Gastrocnemius medialis (tissue), 4 donors: ENCODE measurements at regions of chr2 and their contacts with region 1.

Region 1: DNA sequence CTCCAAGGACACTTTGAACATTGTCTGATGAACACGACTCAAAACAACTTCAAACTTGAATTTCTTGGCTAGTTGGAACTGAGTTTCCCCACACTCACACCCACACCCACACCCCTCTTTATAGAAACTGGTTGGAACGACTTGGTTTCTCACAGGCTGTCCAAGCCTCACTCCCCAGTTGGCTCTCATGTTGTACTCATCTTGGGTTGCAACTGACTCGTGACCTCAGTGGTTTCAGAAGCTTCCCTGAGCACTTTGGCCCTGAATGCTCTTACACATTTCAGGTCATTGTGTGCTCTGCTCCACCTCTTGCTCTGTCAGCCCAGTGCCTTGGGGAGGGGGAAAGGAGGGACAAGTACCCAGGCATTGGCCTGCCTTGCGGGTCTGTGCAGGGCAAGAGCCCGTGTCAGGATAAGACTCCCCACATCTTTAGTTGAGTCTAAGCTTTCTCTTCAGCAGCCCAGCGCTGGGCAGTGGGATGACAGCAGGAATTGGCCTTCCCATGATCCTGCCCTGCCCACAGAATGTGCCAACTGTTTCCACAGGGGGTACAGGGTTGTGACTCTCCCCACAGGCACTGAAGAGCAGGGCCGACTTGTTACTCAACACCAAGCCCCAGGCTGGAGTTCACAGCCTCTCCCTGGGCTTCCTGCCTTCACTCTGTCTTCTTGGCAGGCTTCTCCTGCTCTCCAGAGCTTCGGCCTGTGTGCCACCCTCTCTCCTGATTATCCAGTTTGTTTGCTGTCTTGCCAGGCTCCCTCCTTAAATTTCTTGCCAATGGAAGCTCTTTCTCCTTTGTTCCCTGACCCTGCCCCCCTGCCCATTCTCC is 104.6 kb downstream of the RTN4 start:
- DNase-seq: peak; percentile 91 to 97
- ATAC-seq: peak; percentile 91 to 96
- H3K4me3 ChIP-seq: peak overlapping the region in 3 of 4 donors; percentile 21 to 47 (median 27)
- H3K27ac ChIP-seq: peak overlapping the region; percentile 91 to 95 (median 94)
- H3K4me1 ChIP-seq: peaks cover 22 to 27% of the 10 kb centered on the region in 2 donors
- H3K27me3 ChIP-seq: no peaks in the 10 kb centered on the region
- CTCF ChIP-seq: no peak
- POLR2A ChIP-seq: peak; percentile 50 to 57

Region 2: GRCh38 chr2:54966165-54966832 is 20.7 kb after region 1 on chr2:
- in situ Hi-C with region 1: no loop called
- intact Hi-C with region 1: loop called (anchors 2 kb)
- DNase-seq: peak; percentile 53 to 73
- ATAC-seq: peak; percentile 57 to 70
- H3K4me3 ChIP-seq: no peak overlapping the region
- H3K27ac ChIP-seq: peak overlapping the region; percentile 89 to 93 (median 91)
- H3K4me1 ChIP-seq: peaks cover 65 to 88% of the 10 kb centered on the region in 2 donors
- H3K27me3 ChIP-seq: no peaks in the 10 kb centered on the region
- CTCF ChIP-seq: no peak
- POLR2A ChIP-seq: peak in 1 of 2 donors; percentile 18

Region 3: GRCh38 chr2:54977149-54977548 is 31.5 kb after region 1 on chr2:
- in situ Hi-C with region 1: no loop called
- intact Hi-C with region 1: loop called (anchors 2 kb)
- DNase-seq: no peak
- ATAC-seq: no peak
- H3K4me3 ChIP-seq: peak overlapping the region; percentile 3 to 36 (median 21)
- H3K27ac ChIP-seq: peak overlapping the region; percentile 89 to 94 (median 91)
- H3K4me1 ChIP-seq: peaks cover 85 to 98% of the 10 kb centered on the region in 2 donors
- H3K27me3 ChIP-seq: no peaks in the 10 kb centered on the region
- CTCF ChIP-seq: no peak
- POLR2A ChIP-seq: no peak

Region 4: GRCh38 chr2:55232084-55232862 is 286.7 kb after region 1 on chr2 and contains the starts of genes CLHC1 and RPS27A:
- in situ Hi-C with region 1: no loop called
- intact Hi-C with region 1: loop called (anchors 2 kb)
- DNase-seq: peak; percentile 86 to 87
- ATAC-seq: peak; percentile 98
- H3K4me3 ChIP-seq: peak within 1 kb of the TSS; percentile 72 to 96 (median 87)
- H3K27ac ChIP-seq: peak within 1 kb of the TSS; percentile 89 to 96 (median 92)
- H3K4me1 ChIP-seq: peaks cover 23 to 24% of the 10 kb centered on the region in 2 donors
- H3K27me3 ChIP-seq: no peaks in the 10 kb centered on the region
- CTCF ChIP-seq: peak in 2 of 5 experiments; percentile 9 to 16
- POLR2A ChIP-seq: peak; percentile 85 to 87
- total RNA-seq, gene CLHC1: 0.46 to 4.9 (median 0.85) TPM in 3 of 4 donors, not detected in the other
- total RNA-seq, gene RPS27A: 884 to 1,266 (median 965) TPM